Activated B cell treated with CpG ODN at 0.5 μM for 24 hours (primary cell): ENCODE measurements at regions of chr2 and their contacts with region 1.

Region 1: DNA sequence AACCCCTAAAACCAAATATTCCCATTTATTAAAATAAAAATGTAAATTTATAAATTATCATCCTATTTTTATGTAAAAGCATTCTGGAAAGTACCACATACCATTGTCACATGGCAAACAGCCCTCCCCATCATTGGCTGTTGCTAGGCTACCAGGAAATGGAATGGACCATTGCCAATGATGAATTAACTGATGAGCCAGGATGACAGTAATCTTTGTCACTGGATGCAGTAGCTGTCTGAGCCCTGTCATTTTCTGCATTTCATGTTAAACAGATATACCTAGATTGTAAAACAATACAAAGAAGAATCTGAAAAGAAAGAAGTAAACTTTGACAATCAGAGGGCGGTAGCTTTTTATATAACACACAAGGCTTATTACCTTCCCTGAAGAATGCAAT is 641.4 kb downstream of the BCL11A start:
- DNase-seq: no peak
- ATAC-seq: no peak
- H3K4me3 Mint-ChIP-seq: no peak overlapping the region
- H3K27ac Mint-ChIP-seq: no peak overlapping the region
- H3K4me1 Mint-ChIP-seq: peaks cover 26% of the 10 kb centered on the region
- H3K27me3 Mint-ChIP-seq: no peaks in the 10 kb centered on the region
- CTCF ChIP-seq: no peak

Region 2: GRCh38 chr2:60064687-60065389 is 152.8 kb after region 1 on chr2:
- CTCF ChIA-PET with region 1: no interaction called
- POLR2A ChIA-PET with region 1: no interaction called
- intact Hi-C with region 1: no loop called
- DNase-seq: no peak
- ATAC-seq: no peak
- H3K4me3 Mint-ChIP-seq: no peak overlapping the region
- H3K27ac Mint-ChIP-seq: no peak overlapping the region
- H3K4me1 Mint-ChIP-seq: peaks cover 3% of the 10 kb centered on the region
- H3K27me3 Mint-ChIP-seq: peaks cover 2% of the 10 kb centered on the region
- CTCF ChIP-seq: no peak

Region 3: DNA sequence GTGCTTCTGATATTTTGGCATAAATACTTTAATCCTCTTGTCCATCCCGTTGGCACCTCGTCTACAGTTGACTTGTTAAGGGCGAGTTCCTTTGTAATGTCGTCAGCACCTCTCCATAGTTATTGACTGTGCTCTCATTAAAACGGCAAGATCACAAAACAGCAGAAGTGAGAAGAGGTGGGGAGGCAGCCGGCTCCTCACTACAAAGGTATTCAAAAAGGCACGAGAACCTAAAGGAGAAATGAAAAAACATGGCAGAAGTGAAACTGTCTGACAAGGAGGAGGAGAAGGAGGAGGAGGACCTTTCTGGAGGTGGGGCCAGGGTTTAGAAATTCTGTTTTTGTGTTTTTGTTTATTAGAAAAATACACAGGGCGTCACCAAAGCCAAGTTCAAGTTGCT is 405.8 kb after region 1 on chr2:
- CTCF ChIA-PET with region 1: no interaction called
- POLR2A ChIA-PET with region 1: no interaction called
- intact Hi-C with region 1: no loop called
- DNase-seq: no peak
- ATAC-seq: peak; percentile 85
- H3K4me3 Mint-ChIP-seq: peak overlapping the region; percentile 59
- H3K27ac Mint-ChIP-seq: peak overlapping the region; percentile 82
- H3K4me1 Mint-ChIP-seq: peaks cover 82% of the 10 kb centered on the region
- H3K27me3 Mint-ChIP-seq: no peaks in the 10 kb centered on the region
- CTCF ChIP-seq: no peak

Region 4: GRCh38 chr2:60406192-60406591 is 494.1 kb after region 1 on chr2:
- CTCF ChIA-PET with region 1: no interaction called
- POLR2A ChIA-PET with region 1: interaction called, 14 read pairs
- intact Hi-C with region 1: no loop called
- DNase-seq: no peak
- ATAC-seq: no peak
- H3K4me3 Mint-ChIP-seq: no peak overlapping the region
- H3K27ac Mint-ChIP-seq: peak overlapping the region; percentile 62
- H3K4me1 Mint-ChIP-seq: peaks cover 81% of the 10 kb centered on the region
- H3K27me3 Mint-ChIP-seq: no peaks in the 10 kb centered on the region
- CTCF ChIP-seq: no peak